ENCODE measurements at regions of chr12 and their contacts with region 1.

Region 1: DNA sequence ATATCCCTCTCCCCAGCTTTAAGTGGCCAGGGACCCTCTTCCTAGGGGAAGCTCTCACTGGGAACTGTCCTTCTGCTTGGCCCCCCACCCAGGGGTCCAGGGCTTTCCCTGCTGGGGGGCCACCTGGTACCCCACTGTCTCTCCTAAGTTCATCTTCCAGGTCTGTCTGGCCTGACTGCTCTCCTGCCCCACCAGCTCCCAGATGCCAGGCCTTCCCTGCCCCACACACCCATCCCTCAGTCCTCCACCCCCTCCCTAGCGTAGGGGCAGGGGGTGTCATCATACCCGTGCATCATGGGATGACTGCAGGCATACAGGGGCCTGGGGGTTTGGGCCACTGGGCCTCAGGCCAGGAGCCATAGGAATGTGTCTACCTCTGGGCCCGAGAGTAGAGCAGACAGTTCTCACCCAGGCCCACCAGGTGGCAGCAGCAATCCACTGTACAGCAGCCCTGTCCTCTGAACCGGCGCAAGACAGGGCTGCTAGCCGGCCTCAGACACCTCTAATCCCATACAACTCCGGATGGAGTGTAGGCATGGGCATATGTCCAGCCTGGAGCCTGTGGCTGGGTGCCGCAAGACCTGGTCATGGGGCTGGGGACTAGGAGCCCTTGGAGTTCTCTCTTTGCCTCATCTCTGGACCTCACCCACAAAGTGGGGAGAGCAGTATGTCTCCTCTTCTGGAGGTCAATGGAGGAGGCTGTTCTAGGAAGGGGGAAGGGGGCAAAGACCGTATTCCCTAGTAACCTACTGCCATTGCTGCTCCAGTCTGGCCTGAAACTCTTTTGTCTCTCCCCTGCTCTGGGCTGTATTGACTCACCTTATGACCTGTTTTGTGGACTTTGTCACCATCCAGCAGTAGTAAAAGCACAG is 10.0 kb upstream of the SMARCD1 start:
- DNase-seq: peak; percentile 82
- H3K4me3 ChIP-seq: no peak overlapping the region
- H3K27ac ChIP-seq: no peak overlapping the region
- H3K4me1 ChIP-seq: peaks cover 4% of the 10 kb centered on the region
- H3K27me3 ChIP-seq: no peaks in the 10 kb centered on the region
- CTCF ChIP-seq: peak; percentile 78 to 91
- POLR2A ChIP-seq: no peak

Region 2: DNA sequence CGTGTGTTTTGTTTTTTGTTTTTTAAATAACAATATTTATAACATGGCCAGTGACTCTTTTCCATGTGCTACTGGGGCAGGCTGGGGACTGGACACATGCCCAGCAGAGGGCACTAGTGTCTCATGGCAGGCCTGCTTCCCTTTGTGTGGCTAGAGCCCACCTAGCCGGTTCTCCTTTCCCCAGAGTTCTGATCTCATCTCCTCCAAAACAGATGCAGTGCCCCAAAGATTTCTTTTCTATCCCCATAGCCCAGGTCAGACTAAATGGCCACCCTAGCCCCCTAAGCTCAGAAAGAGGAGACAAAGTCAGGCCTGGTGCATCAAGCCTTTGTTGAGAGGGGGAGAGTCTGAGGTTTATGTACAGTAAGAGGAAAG is 430.6 kb before region 1 on chr12:
- CTCF ChIA-PET with region 1: no interaction called
- POLR2A ChIA-PET with region 1: no interaction called
- dilution Hi-C with region 1: no loop called
- intact Hi-C with region 1: no loop called
- DNase-seq: peak; percentile 69
- H3K4me3 ChIP-seq: no peak overlapping the region
- H3K27ac ChIP-seq: peak overlapping the region; percentile 26
- H3K4me1 ChIP-seq: peaks cover 31% of the 10 kb centered on the region
- H3K27me3 ChIP-seq: no peaks in the 10 kb centered on the region
- CTCF ChIP-seq: peak; percentile 91 to 92
- POLR2A ChIP-seq: no peak

Region 3: GRCh38 chr12:49866859-49867579 is 208.2 kb before region 1 on chr12:
- CTCF ChIA-PET with region 1: interaction called, 61 read pairs
- POLR2A ChIA-PET with region 1: no interaction called
- dilution Hi-C with region 1: no loop called
- intact Hi-C with region 1: loop called (anchors 1 kb)
- DNase-seq: peak; percentile 42
- H3K4me3 ChIP-seq: no peak overlapping the region
- H3K27ac ChIP-seq: no peak overlapping the region
- H3K4me1 ChIP-seq: peaks cover 20% of the 10 kb centered on the region
- H3K27me3 ChIP-seq: peaks cover 2 to 7% of the 10 kb centered on the region in 2 experiments
- CTCF ChIP-seq: peak; percentile 91 to 97
- POLR2A ChIP-seq: no peak

Region 4: GRCh38 chr12:49974231-49974675 is 100.9 kb before region 1 on chr12:
- CTCF ChIA-PET with region 1: interaction called, 317 read pairs
- POLR2A ChIA-PET with region 1: no interaction called
- dilution Hi-C with region 1: loop called (anchors 25 kb)
- intact Hi-C with region 1: loop called (anchors 1 kb)
- DNase-seq: peak; percentile 47
- H3K4me3 ChIP-seq: no peak overlapping the region
- H3K27ac ChIP-seq: no peak overlapping the region
- H3K4me1 ChIP-seq: no peaks in the 10 kb centered on the region
- H3K27me3 ChIP-seq: peaks cover 7 to 9% of the 10 kb centered on the region in 2 experiments
- CTCF ChIP-seq: peak; percentile 53 to 80
- POLR2A ChIP-seq: no peak

Region 5: GRCh38 chr12:50025187-50026059 is 49.7 kb before region 1 on chr12 and contains the start of gene RACGAP1:
- CTCF ChIA-PET with region 1: interaction called, 13 read pairs
- POLR2A ChIA-PET with region 1: no interaction called
- dilution Hi-C with region 1: no loop called
- intact Hi-C with region 1: no loop called
- DNase-seq: peak; percentile 99
- H3K4me3 ChIP-seq: peak within 1 kb of the TSS; percentile 40 to 98 (median 64)
- H3K27ac ChIP-seq: peak within 1 kb of the TSS; percentile 16
- H3K4me1 ChIP-seq: peaks cover 10% of the 10 kb centered on the region
- H3K27me3 ChIP-seq: peaks cover 14 to 17% of the 10 kb centered on the region in 2 experiments
- CTCF ChIP-seq: no peak
- POLR2A ChIP-seq: peak; percentile 31
- total RNA-seq, gene RACGAP1: 56.3 and 62.9 TPM in 2 replicates

Region 6: DNA sequence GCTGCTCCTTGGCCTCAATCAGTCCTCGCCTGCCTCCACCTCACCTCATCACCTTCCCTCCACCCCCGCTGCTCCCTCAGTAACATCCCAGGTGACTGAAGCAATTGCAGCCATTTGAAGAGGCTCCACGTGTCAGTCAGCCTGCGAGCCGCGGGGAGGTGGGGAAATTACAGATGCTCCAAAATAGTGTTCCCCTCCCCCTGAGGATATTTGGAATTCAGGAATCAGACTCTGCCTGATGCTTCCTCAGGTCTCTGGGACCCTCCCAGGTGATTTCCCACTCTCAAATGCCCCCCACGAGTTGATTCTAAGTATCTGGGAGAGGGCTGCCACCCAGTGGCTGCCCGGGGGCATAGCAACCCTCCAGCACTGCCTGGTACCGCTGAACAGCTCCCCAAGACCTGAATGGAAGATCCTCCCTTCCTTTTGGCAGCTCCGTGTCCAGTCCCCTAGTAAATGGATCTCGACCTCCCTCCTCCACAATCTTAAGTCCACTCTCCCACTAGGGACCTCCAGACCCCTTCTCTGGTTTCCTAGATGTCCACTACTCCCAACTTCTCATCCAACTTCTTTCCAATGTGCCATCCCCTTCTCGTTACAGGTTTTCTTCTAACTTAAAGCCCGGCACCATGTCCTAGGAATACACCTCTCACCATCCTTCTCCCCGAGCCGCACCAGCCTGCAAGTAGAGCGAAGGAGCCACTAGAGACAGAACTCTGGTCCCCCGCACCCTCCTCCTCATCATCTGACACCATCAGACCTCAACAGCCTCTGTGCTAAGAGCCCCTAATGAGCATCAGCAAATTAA is 19.1 kb before region 1 on chr12:
- CTCF ChIA-PET with region 1: interaction called, 41 read pairs
- POLR2A ChIA-PET with region 1: no interaction called
- dilution Hi-C with region 1: no loop called
- intact Hi-C with region 1: no loop called
- DNase-seq: peak; percentile 59
- H3K4me3 ChIP-seq: no peak overlapping the region
- H3K27ac ChIP-seq: no peak overlapping the region
- H3K4me1 ChIP-seq: peaks cover 5% of the 10 kb centered on the region
- H3K27me3 ChIP-seq: peaks cover 54 to 56% of the 10 kb centered on the region in 2 experiments
- CTCF ChIP-seq: peak; percentile 95 to 96
- POLR2A ChIP-seq: no peak

Region 7: GRCh38 chr12:50167041-50167828 is 92.1 kb after region 1 on chr12 and contains the start of gene CERS5:
- CTCF ChIA-PET with region 1: interaction called, 87 read pairs
- POLR2A ChIA-PET with region 1: no interaction called
- dilution Hi-C with region 1: no loop called
- intact Hi-C with region 1: loop called (anchors 2 kb)
- DNase-seq: peak; percentile 99
- H3K4me3 ChIP-seq: peak within 1 kb of the TSS; percentile 92 to 98 (median 93)
- H3K27ac ChIP-seq: peak within 1 kb of the TSS; percentile 75
- H3K4me1 ChIP-seq: peaks cover 7% of the 10 kb centered on the region
- H3K27me3 ChIP-seq: no peaks in the 10 kb centered on the region
- CTCF ChIP-seq: no peak
- POLR2A ChIP-seq: peak; percentile 91
- total RNA-seq, gene CERS5: 60.4 and 66.4 TPM in 2 replicates

Region 8: DNA sequence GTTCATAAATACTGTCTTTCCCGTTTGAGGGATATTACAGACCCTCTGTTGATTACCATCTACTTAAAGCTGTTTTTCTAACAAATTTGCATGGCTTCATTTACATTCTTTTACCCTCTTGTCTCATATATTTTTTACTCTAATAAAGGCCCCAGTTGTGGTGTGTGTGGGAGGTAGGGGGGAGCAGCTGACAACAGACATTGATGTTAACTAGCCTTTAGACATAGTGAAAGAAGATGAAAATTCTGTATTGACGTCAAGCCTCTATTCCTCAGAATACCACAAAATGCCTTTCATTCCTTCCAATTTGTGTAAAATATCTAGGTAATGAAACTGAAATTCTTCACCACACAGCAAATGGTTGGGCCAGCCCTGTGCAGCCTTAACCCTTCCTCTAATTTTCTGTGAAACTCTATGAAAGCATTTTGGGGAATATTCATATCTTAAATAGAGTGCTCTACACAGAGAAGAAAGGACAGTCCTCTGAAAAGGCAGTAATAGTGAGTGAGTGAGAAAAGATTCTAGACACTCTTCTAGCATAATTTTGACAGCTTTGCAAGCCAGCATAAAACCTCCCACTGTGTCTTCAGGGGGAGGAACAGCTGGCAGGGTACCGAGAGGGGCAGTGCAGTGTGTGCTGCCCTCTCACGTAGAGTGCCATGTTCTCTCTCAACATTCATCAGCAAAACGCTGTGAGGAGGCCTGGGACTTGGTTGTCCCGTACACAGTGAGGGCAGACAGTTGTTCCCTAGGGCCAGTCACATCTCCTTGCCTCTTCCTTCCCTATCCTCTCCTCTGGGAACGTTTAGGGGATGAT is 112.1 kb after region 1 on chr12:
- CTCF ChIA-PET with region 1: no interaction called
- POLR2A ChIA-PET with region 1: no interaction called
- dilution Hi-C with region 1: no loop called
- intact Hi-C with region 1: no loop called
- DNase-seq: no peak
- H3K4me3 ChIP-seq: no peak overlapping the region
- H3K27ac ChIP-seq: peak overlapping the region; percentile 90
- H3K4me1 ChIP-seq: peaks cover 40% of the 10 kb centered on the region
- H3K27me3 ChIP-seq: no peaks in the 10 kb centered on the region
- CTCF ChIP-seq: no peak
- POLR2A ChIP-seq: no peak

Region 9: DNA sequence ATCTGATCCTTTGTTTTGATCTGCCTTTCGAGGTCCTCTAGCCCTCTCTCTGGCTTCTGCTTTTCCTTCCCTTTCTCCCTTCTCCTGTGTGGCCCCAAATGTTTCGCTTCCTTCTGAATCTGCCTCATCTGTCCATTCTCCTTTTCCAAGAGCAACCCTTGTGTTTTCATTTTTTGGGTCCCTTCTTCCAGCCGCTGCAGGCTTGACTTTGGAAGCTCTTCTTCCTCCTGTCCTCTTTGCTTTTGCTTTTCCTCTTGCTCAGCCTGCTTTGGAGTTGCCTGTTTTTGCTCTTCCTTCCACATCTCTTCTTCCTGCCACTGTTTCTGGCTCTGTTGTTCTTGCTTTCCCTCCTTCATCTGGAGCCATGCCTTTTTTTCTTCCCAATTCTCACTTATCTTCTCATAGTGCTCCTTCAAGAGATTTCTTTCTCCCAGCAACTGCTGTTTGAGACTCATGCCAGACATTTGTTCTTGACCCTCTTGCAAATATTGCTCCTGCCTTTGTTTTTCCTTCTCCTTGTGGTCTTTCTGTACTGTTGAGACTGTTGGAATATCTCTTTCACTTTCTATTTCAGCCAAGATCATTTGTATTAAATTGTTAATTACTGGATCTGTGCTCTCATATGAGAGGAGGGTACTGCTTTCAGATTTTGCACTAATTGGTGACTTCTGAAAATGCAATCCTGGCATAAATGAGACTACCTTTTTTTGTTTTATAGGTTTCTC is 278.9 kb after region 1 on chr12:
- CTCF ChIA-PET with region 1: no interaction called
- POLR2A ChIA-PET with region 1: no interaction called
- dilution Hi-C with region 1: no loop called
- intact Hi-C with region 1: no loop called
- DNase-seq: peak; percentile 47
- H3K4me3 ChIP-seq: no peak overlapping the region
- H3K27ac ChIP-seq: no peak overlapping the region
- H3K4me1 ChIP-seq: peaks cover 2% of the 10 kb centered on the region
- H3K27me3 ChIP-seq: no peaks in the 10 kb centered on the region
- CTCF ChIP-seq: no peak
- POLR2A ChIP-seq: no peak

Region 10: DNA sequence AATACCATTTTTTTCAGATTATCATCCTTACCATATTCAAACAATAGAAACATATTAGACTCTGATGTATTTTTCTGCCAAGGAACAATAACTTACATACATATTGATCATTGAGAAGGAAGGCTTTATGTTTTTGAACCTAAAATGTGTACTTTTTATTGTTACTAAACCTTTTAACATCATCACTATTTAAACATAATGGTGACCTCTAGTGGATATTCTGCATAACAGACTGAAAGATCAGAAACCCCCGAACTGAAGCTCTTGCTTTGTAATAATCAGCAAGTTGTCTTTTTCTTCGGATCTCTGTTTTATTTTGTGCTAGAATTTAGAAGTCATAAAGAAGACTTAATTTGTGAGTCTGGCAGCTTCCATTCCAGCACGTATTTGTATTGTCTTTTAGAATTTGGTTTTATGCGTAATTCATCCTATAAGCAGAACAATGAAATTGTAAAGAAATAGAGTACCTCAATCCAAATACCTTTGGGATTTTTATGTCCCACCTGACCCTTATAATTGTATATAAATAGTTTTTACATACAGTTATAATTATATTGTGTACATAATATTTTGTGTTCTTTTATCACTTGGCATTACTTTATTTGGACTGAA is 562.8 kb after region 1 on chr12:
- CTCF ChIA-PET with region 1: no interaction called
- POLR2A ChIA-PET with region 1: no interaction called
- dilution Hi-C with region 1: no loop called
- intact Hi-C with region 1: loop called (anchors 5 kb)
- DNase-seq: peak; percentile 74
- H3K4me3 ChIP-seq: no peak overlapping the region
- H3K27ac ChIP-seq: no peak overlapping the region
- H3K4me1 ChIP-seq: peaks cover 12% of the 10 kb centered on the region
- H3K27me3 ChIP-seq: no peaks in the 10 kb centered on the region
- CTCF ChIP-seq: peak; percentile 24 to 43
- POLR2A ChIP-seq: no peak

Measured in endothelial cell of umbilical vein (primary cell).